Gastrocnemius medialis (tissue), 4 donors: ENCODE measurements at regions of chr4 and their contacts with region 1.

Region 1: DNA sequence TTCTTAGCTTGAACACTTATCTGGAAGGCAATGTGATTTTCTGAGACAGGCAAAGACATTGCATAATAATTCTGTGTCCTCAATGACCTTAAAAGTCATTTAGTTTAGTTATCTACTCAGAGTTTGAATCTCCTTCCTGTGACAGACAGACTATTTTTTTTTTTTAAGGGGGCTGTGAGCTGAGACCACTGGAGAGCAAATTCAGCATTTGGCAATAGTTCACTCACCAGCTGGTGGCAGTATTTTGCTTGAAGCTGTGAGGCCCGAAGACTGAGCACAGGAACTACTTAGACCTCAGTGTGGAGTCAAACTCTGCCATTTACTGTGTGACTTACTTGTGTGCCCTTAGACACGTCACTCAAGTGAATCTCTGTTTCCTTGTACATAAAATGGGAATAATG is 22.9 kb upstream of the CPE start:
- DNase-seq: no peak
- ATAC-seq: no peak
- H3K4me3 ChIP-seq: no peak overlapping the region
- H3K27ac ChIP-seq: no peak overlapping the region
- H3K4me1 ChIP-seq: no peaks in the 10 kb centered on the region
- H3K27me3 ChIP-seq: no peaks in the 10 kb centered on the region
- CTCF ChIP-seq: peak in 2 of 5 experiments; percentile 16 to 22
- POLR2A ChIP-seq: no peak

Region 2: GRCh38 chr4:165464813-165465381 is 109.0 kb after region 1 on chr4:
- in situ Hi-C with region 1: loop called in 1 of 4 experiments (anchors 10 kb)
- intact Hi-C with region 1: loop called (anchors 10 kb)
- DNase-seq: no peak
- ATAC-seq: peak in 1 of 2 donors; percentile 53
- H3K4me3 ChIP-seq: no peak overlapping the region
- H3K27ac ChIP-seq: no peak overlapping the region
- H3K4me1 ChIP-seq: no peaks in the 10 kb centered on the region
- H3K27me3 ChIP-seq: no peaks in the 10 kb centered on the region
- CTCF ChIP-seq: peak; percentile 50 to 71 (median 61)
- POLR2A ChIP-seq: no peak

Region 3: DNA sequence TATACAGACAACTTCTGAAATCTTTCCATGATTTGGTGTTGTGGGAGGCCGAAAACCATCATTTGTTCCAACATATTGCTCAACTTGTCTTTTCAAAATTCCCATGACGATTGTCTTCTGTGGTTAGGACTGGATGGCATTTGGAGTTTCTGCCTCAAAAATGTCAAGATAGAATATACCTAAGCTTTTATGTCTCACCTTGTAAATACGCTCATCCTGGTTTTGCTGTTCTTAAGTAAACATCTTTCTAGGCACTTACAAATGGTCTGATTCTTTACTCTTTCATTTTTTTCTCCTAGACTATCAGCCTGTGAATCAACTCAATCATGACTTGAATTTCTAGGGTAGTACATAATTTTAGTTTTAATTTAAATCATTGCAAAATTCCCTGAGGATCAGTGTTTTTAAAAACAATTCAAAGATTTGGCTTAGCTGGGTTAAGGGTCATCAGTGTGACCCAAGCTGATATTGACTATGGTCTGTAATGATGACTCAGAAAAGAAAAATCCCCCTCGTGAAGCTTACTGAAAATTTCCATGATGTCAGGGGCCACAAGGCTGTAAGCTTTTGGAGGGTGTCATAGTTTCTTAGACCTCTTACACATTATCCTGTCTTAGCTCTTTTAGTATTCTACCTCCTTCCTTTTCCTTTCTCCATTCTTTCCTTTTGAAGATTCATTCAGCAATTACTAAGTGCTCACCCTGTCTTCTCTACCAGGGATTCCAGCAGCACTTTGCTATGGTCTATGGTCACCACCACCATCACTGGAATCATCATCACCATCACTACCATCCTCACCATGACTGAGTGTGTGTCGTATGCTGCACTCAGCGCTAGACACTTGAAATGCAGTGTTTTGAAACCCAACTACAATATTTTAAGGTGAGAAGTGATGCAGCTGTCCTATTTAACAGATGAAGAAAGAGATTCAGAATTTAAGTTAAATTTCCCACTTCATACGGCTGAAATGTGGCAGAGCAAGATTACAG is 147.3 kb after region 1 on chr4:
- in situ Hi-C with region 1: no loop called
- intact Hi-C with region 1: no loop called
- DNase-seq: no peak
- ATAC-seq: peak in 1 of 2 donors; percentile 76
- H3K4me3 ChIP-seq: no peak overlapping the region
- H3K27ac ChIP-seq: peak overlapping the region; percentile 10 to 48 (median 32)
- H3K4me1 ChIP-seq: no peaks in the 10 kb centered on the region
- H3K27me3 ChIP-seq: no peaks in the 10 kb centered on the region
- CTCF ChIP-seq: no peak
- POLR2A ChIP-seq: no peak